ENCODE measurements at regions of chr1 and their contacts with region 1.

Region 1: GRCh38 chr1:20212685-20213331 is 26.5 kb upstream of the PLA2G2C start:
- DNase-seq: peak; percentile 80
- H3K4me3 ChIP-seq: no peak overlapping the region
- H3K27ac ChIP-seq: peak overlapping the region; percentile 97
- H3K4me1 ChIP-seq: peaks cover 41% of the 10 kb centered on the region
- H3K27me3 ChIP-seq: no peaks in the 10 kb centered on the region
- CTCF ChIP-seq: peak; percentile 58 to 84

Region 2: DNA sequence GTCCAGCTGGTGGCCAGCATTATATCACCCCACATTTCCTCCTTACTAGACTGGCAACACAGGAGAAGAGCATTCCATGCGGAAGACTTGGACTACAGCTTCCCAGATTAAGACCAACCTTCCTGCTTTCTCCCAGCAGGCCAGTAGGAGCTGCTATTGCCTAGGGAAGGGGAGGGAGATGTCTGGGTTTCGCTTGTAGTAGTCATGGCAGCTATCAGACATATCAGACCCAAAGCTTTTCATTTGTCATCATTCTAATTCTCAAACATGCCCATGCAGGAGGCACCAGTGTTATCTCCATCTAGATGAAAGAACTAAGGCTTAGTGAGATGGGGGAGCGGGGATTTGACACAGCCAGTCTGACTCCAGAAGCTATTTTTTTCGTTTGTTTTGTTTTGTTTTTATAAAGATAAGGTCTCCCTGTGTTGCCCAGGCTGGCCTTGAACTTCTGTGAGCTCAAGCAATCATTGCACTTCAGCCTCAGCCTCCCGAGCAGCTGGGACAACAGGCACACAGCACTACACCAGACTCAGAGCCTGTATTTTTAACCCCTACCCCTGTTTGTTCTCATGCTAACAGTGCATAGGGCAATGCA is 237.9 kb before region 1 on chr1:
- CTCF ChIA-PET with region 1: no interaction called
- dilution Hi-C with region 1: no loop called
- in situ Hi-C with region 1: no loop called
- intact Hi-C with region 1: loop called (anchors 5 kb)
- DNase-seq: peak; percentile 86
- H3K4me3 ChIP-seq: no peak overlapping the region
- H3K27ac ChIP-seq: no peak overlapping the region
- H3K4me1 ChIP-seq: peaks cover 6% of the 10 kb centered on the region
- H3K27me3 ChIP-seq: no peaks in the 10 kb centered on the region
- CTCF ChIP-seq: peak; percentile 100

Region 3: GRCh38 chr1:20123722-20124455 is 88.9 kb before region 1 on chr1:
- CTCF ChIA-PET with region 1: no interaction called
- dilution Hi-C with region 1: no loop called
- in situ Hi-C with region 1: no loop called
- intact Hi-C with region 1: no loop called
- DNase-seq: peak; percentile 67
- H3K4me3 ChIP-seq: no peak overlapping the region
- H3K27ac ChIP-seq: peak overlapping the region; percentile 36
- H3K4me1 ChIP-seq: peaks cover 11% of the 10 kb centered on the region
- H3K27me3 ChIP-seq: peaks cover 2% of the 10 kb centered on the region
- CTCF ChIP-seq: no peak

Region 4: DNA sequence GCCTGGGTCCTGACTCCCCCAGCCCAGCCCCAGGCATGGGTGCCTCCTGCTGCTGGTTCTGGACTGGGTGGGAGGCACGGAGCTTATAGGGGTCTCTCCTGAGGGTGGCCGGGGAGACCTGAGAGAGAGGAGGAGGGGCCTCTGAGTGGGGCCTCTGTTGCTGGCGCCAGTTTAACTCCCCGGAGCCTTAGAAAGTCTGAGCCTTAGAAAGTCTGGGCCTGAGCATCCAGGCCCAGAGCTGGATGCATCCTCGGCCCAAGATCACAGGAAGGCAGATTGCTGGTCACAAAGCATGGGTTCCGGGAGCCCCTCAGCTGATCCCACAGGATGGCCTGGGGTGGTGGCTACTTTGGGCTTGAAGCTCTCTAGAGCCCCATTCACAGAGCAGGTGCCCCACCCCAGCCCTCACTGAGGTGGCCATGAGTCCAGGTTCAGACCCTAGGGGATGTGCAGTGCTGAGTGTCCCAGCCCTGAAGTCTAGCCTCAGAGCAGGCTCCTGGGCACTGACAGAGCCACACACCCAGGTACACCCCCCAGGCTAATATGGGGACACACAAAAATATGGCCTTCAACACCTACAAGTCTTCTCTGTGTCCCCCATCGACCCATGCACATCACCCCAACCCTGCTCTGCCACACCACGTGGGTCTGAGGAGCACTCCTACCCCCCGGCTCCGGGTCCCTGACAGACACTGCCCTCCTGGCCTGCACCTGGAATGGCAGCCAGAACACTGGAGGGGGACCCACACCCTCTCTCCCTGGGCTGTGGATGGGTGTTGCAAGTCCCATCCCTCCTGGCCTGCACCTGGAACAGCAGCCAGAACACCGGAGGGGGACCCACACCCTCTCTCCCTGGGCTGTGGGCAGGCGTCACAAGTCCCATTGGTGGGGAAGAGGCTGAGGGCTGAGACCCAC is 64.0 kb before region 1 on chr1:
- CTCF ChIA-PET with region 1: no interaction called
- dilution Hi-C with region 1: no loop called
- in situ Hi-C with region 1: no loop called
- intact Hi-C with region 1: no loop called
- DNase-seq: no peak
- H3K4me3 ChIP-seq: no peak overlapping the region
- H3K27ac ChIP-seq: no peak overlapping the region
- H3K4me1 ChIP-seq: peaks cover 6% of the 10 kb centered on the region
- H3K27me3 ChIP-seq: no peaks in the 10 kb centered on the region
- CTCF ChIP-seq: no peak

Region 5: DNA sequence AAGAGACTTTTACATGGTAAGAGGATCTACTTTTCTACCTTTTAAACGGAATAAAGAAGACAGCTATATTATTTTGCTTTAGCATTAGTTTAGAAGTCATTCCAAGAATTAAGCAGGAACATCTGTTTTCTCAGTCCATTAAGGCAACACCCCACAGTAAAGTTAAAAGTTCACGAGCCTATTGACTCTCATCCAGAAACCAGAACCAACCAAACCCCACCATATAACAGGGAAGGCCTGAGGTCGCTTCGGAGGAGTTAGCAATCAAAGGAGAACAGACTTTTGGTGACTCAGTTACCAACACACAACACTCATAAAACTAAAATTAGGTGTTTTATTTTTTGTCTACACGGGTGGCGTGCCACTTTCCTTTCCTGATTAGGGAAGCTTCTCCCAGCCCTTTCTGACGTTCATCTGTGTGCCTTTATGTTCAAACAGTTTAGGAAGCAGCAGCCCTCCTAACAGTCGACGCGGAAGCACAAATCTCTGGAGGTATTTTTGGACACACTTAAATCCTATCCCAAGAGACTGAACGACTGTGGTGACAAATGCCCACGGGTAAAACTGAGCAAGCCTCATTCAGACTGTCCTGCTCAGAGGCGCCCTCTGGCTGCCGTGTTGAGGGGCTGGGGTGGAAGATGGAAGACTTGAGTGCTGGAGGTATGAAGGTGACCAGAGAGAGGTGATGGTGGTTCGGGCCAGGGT is 17.9 kb before region 1 on chr1:
- CTCF ChIA-PET with region 1: interaction called, 10 read pairs
- dilution Hi-C with region 1: no loop called
- in situ Hi-C with region 1: no loop called
- intact Hi-C with region 1: loop called (anchors 1 kb)
- DNase-seq: peak; percentile 46
- H3K4me3 ChIP-seq: no peak overlapping the region
- H3K27ac ChIP-seq: peak overlapping the region; percentile 24
- H3K4me1 ChIP-seq: peaks cover 53% of the 10 kb centered on the region
- H3K27me3 ChIP-seq: no peaks in the 10 kb centered on the region
- CTCF ChIP-seq: peak; percentile 83 to 84

Region 6: DNA sequence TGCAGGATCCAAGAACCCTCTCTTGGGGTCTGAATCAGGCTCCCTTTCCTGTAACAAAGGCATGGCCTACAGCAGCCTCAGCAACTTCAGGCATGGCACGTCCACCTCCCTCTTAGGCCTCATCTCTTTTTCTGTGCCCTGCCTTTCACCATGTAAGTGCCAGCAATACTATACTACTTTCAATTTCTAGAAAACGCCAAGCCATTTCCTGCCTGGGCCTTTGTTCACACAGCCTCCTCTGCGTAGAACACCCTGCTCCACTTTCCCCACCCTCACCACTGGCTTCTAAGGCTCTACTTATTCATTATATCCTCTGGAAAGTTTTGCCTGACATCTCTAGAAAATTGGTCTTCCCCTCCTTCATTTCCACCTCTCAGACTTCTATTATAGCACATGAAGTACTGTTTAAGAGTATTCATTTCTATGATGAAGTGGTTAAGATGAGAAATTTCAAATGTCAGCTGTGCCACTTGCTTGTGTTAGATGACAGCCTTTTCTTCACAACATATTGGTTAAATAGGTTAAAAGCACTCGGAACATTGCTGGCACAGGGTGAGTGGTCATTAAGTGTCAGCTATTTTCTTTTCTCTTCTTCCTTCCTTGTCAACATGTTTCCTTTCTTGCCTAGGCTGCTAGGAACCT is 36.3 kb after region 1 on chr1:
- CTCF ChIA-PET with region 1: no interaction called
- dilution Hi-C with region 1: no loop called
- in situ Hi-C with region 1: no loop called
- intact Hi-C with region 1: no loop called
- DNase-seq: no peak
- H3K4me3 ChIP-seq: no peak overlapping the region
- H3K27ac ChIP-seq: no peak overlapping the region
- H3K4me1 ChIP-seq: no peaks in the 10 kb centered on the region
- H3K27me3 ChIP-seq: no peaks in the 10 kb centered on the region
- CTCF ChIP-seq: no peak

Region 7: DNA sequence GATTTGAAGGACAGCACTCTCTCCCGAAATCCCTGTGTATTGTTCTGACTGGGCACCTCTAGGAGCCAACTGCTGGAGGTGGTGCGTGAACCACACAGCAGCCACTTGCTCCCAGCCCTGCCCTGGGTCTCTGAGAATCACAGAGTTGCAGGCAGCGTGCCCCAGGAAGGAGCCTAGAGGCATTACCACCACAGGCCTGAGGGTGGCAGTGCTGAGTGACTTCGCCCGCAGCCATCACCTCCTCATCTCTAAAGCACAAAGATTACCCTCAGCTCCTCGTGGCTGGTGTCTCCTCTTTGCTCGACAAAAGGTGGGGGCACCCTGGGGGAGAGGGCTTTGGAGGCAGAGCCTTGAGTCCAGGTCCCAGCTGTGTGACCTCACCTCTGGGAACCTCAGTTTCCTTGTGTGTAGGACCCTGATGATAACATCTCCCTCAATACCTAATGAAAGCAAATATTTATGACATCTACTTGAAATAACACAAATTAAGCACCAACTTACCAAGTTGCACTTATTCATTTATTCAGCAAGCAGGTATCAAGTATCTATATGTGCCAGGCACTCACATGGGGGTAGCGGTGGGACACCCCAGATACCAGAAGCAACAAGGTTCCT is 164.2 kb after region 1 on chr1:
- CTCF ChIA-PET with region 1: no interaction called
- dilution Hi-C with region 1: no loop called
- in situ Hi-C with region 1: no loop called
- intact Hi-C with region 1: loop called (anchors 5 kb)
- DNase-seq: peak; percentile 28
- H3K4me3 ChIP-seq: no peak overlapping the region
- H3K27ac ChIP-seq: no peak overlapping the region
- H3K4me1 ChIP-seq: peaks cover 29% of the 10 kb centered on the region
- H3K27me3 ChIP-seq: no peaks in the 10 kb centered on the region
- CTCF ChIP-seq: peak; percentile 82 to 86

Region 8: DNA sequence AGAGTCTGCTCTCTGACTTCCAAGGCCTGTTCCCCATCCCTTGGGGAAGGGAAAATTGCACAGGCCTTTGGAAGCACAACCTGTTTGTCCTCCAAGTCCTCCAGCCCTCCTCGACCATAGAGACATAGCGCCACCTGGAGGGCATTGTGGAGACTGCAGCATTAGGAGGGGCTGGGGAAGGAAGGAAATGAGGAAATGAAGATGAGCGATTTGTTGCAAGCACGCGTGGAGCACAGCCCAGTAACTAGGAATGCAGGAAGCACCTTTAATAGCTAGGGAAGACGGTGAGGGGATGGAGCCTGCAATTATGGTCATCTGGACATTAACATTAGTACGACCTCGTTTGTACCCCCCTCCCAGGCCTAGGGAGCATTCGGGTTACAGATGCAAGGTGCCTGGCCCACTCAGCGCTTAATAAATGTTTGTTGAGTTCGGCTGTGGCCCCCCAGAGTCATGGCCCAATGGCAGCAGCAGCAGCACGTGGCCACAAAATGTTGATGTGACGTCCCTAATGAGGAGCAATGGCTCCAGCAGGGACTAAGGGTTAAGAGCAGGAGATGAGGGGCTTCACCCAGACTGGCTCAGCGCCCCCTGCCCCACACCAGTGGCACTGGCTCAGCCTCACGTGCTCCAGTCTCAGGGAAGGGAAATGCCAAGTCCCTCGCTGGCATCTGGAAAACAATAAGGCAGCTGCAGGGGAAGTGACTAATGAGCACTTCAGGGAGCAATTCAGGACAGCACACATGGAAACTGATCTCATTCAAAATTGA is 281.2 kb after region 1 on chr1:
- CTCF ChIA-PET with region 1: interaction called, 15 read pairs
- dilution Hi-C with region 1: loop called (anchors 5 kb)
- in situ Hi-C with region 1: loop called (anchors 5 kb)
- intact Hi-C with region 1: loop called (anchors 1 kb)
- DNase-seq: peak; percentile 91
- H3K4me3 ChIP-seq: no peak overlapping the region
- H3K27ac ChIP-seq: peak overlapping the region; percentile 94
- H3K4me1 ChIP-seq: peaks cover 42% of the 10 kb centered on the region
- H3K27me3 ChIP-seq: no peaks in the 10 kb centered on the region
- CTCF ChIP-seq: peak; percentile 98 to 99

Measured in mammary epithelial cell (primary cell).